Activated CD4-positive, alpha-beta memory T cell treated with anti-CD3 and anti-CD28 coated beads for 36 hours (primary cell): ENCODE measurements at regions of chr11 and their contacts with region 1.

Region 1: DNA sequence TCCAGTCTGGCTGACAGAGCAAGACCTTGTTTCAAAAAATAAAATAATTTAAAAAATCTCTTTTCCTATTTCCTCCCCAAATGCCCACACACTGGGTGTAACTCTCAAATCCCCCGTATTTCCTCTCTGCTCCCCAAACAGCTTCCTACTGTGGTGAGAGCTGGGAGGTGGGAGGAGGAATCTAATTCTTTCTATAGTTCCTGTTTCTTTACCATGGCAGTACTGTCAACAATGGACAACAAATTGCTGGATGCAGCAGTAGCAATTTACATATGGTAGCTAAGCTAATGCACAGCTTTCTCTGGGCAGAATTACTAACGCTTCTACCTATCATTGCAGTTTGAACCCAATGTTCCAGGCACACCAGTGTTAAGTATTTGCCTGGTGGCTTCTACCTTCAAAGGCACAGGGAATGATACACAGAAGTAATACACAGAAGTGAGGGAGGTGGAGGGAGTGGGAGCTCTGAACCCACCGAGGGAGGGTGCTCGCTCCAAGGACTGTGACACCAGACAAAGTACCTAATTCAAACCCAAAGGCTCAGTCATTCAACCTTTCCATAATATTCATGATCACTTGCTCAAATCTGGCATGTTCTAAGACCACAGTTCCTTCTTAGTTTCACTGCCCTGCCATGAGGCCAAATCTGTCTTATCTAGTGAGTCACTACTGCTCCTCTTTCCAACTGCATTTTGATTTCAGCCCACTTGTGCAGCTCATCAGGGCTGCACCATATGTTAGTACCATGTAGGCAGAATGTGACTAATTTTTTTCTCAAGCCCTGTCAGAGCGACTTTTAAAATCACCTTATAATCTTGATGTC is 37.9 kb downstream of the CELF1 start:
- DNase-seq: peak; percentile 73
- H3K4me3 Mint-ChIP-seq: peak overlapping the region; percentile 0
- H3K27ac Mint-ChIP-seq: peak overlapping the region; percentile 56
- H3K4me1 Mint-ChIP-seq: peaks cover 82% of the 10 kb centered on the region
- H3K27me3 Mint-ChIP-seq: no peaks in the 10 kb centered on the region

Region 2: GRCh38 chr11:47387911-47388678 is 126.9 kb before region 1 on chr11:
- CTCF ChIA-PET with region 1: no interaction called
- POLR2A ChIA-PET with region 1: no interaction called
- intact Hi-C with region 1: no loop called
- DNase-seq: no peak
- H3K4me3 Mint-ChIP-seq: no peak overlapping the region
- H3K27ac Mint-ChIP-seq: no peak overlapping the region
- H3K4me1 Mint-ChIP-seq: peaks cover 8% of the 10 kb centered on the region
- H3K27me3 Mint-ChIP-seq: no peaks in the 10 kb centered on the region

Region 3: DNA sequence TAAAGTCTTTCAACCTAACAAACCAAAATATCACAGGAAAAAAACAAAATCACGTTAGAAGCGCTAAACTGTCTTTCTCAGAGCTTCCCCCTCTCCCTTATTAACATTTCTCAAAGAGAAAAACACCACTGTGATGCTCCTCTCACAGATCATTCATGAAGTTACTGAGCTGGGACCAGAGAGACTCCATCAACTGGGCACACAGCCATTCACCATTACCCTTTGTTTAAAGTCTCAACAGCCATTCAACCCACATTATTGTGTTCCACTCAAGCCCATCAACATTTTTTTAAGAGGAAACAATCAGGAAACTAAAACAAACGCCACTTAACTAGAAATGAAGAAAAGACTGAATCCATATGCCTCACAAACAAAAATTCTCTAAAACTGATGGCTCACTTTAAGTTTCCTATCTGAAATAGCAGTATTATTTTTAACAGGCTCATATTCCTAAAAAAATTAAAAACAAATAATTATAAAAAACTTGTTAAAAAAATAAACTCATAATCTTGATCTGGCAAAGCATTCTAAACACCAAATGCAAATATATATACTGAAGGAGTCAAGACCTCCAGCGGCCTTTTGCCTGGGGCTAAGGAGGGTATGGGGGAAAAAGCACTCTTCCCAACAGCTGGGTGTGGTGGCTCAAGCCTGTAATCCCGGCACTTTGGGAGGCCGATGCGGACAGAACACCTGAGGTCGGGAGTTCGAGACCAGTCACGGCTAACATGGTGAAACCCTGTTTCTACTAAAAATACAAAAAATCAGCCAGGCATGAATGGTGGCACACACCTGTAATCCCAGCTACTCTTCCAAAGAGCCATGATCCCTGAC is 23.9 kb after region 1 on chr11:
- CTCF ChIA-PET with region 1: interaction called, 12 read pairs
- POLR2A ChIA-PET with region 1: interaction called, 17 read pairs
- intact Hi-C with region 1: loop called (anchors 1 kb)
- DNase-seq: no peak
- H3K4me3 Mint-ChIP-seq: no peak overlapping the region
- H3K27ac Mint-ChIP-seq: peak overlapping the region; percentile 87
- H3K4me1 Mint-ChIP-seq: peaks cover 65% of the 10 kb centered on the region
- H3K27me3 Mint-ChIP-seq: no peaks in the 10 kb centered on the region

Region 4: DNA sequence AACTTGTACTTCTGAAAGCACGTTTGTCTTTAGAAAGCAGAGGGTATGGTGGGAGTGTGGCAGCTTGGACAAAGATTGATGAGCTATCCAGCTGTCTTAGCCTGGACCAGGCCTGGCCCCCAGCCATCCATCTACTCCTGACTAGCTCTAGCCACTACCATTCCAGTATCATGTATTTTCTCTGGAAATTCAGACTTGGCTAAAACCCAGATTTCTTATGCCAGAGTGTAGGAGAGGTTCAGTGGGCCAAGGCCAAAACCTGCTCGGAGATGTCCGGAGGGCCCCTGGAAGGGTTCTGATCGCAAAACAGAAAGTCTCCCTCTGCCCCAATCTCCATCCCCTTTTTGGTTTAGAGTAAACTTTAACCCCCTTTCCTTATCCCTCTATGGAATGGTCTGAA is 152.1 kb after region 1 on chr11:
- CTCF ChIA-PET with region 1: no interaction called
- POLR2A ChIA-PET with region 1: no interaction called
- intact Hi-C with region 1: loop called (anchors 1 kb)
- DNase-seq: no peak
- H3K4me3 Mint-ChIP-seq: no peak overlapping the region
- H3K27ac Mint-ChIP-seq: no peak overlapping the region
- H3K4me1 Mint-ChIP-seq: peaks cover 18% of the 10 kb centered on the region
- H3K27me3 Mint-ChIP-seq: no peaks in the 10 kb centered on the region